Cardiac septum (tissue), 1 donor: ENCODE measurements at regions of chr4 and their contacts with region 1.

Region 1: GRCh38 chr4:129641179-129641578 is 545.2 kb downstream of the C4orf33 start:
- DNase-seq: no peak

Region 2: GRCh38 chr4:129218360-129218759 is 422.8 kb before region 1 on chr4:
- intact Hi-C with region 1: loop called (anchors 10 kb)
- DNase-seq: no peak

Region 3: DNA sequence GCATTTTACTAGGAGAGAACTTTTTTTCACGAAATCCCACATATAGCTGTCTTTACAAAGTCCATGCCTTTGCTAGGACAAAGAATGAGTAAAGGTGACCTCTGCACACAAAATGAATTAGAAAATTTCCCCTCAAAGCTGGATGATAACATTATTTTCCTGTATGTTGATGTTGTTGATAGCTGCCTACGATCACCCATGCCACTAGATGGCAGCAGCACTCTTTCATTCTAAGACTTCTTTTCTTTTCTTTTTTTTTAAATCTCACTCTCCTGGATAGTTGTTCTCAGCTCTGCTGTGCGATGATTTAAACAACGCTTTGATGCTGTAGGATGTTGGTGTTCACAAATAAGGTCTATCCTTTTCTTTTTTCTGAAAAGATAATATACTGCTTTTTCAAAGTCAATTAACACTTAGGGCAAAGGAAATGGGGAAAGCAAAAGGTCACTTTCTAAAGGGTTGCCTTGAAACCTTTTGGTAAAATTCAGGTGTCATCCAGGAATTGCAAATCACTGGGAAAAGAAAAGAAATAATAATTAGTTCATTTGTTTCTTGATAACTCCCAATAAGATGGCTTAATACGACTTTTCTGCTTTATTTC is 278.4 kb before region 1 on chr4:
- intact Hi-C with region 1: loop called (anchors 5 kb)
- DNase-seq: no peak

Region 4: GRCh38 chr4:129526814-129527213 is 114.4 kb before region 1 on chr4:
- intact Hi-C with region 1: loop called (anchors 2 kb)
- DNase-seq: no peak

Region 5: DNA sequence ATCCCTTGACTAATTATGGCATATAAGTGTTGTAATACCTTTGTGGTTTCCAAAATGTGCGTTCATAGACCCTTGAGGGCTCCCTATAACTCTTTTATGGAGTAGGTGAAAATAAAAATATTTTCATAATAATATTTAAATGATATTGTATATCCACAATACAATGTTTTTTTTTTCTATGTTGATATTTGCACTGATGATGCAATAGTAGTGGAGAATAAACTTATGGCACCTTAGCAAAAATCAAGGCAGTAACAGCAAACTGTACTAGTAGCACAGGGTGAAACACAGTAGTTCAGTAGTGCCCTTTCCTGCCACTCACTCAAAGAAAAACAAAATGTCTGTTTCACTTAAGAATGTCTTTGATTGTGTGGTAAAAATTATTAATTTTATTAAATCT is 79.9 kb before region 1 on chr4:
- intact Hi-C with region 1: no loop called
- DNase-seq: no peak